ENCODE measurements at regions of chr4 and their contacts with region 1.

Region 1: DNA sequence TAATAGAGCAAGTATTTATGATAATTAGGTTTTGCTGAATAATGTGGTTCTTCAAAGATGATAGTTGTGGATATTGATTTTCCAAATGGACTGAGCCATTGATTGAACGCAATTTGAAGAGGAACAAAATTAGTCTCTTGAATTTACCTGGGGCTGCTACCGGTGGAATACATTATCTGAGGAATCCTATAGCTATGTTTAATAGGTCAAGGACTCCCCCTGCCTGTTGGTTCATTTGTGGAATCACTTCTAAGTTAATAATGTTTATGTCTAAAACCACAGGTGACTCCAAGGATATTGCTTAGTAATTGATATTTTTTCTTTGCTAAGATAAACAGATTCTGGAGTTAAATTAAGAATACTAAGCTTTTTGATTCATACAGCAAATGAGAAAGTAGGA is 576.0 kb upstream of the PABPC4L start:
- DNase-seq: peak; percentile 31
- H3K4me3 Mint-ChIP-seq: no peak overlapping the region
- H3K27ac Mint-ChIP-seq: no peak overlapping the region
- H3K4me1 Mint-ChIP-seq: no peaks in the 10 kb centered on the region
- H3K27me3 Mint-ChIP-seq: no peaks in the 10 kb centered on the region
- CTCF ChIP-seq: peak; percentile 26

Region 2: DNA sequence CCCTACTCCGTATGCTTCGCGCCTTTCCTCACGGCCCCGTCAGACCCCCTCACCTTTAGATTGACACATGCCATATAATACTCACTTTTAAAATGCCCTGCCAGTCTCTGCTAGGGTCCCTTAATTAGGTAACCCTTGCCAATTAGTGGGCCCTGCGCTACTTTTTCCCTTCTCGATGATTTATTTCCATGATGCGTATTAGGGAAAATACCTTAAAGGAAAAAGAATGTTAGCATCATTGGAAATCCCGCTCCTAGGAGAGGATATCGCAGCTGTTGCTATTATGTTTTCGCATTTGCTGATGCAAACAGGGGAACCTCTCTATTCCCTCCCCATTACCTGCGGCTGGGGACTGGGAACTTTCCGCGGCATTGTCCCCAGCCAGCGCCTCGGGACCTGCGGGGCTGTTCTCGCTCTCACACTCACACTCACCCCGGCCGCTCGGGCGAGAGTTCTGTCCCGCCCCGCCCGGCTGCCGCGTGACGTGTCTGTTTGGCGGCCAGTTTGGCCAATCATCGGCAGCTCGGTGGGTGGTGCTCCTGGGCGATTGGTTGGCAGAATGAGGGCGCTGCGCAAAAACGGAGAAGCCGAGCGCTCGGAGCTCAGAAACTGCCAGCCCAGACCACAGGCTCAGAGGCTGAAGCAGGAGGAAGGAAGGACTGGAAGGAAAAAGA is 1628.8 kb before region 1 on chr4 and contains the start of gene PCDH10:
- CTCF ChIA-PET with region 1: interaction called, 12 read pairs
- POLR2A ChIA-PET with region 1: interaction called, 3 read pairs
- intact Hi-C with region 1: loop called (anchors 5 kb)
- DNase-seq: no peak
- H3K4me3 Mint-ChIP-seq: no peak within 1 kb of the TSS
- H3K27ac Mint-ChIP-seq: no peak within 1 kb of the TSS
- H3K4me1 Mint-ChIP-seq: peaks cover 10% of the 10 kb centered on the region
- H3K27me3 Mint-ChIP-seq: peaks cover 45% of the 10 kb centered on the region
- CTCF ChIP-seq: no peak
- total RNA-seq, gene PCDH10: not detected in 2 replicates

Region 3: GRCh38 chr4:133154725-133155124 is 1622.9 kb before region 1 on chr4:
- CTCF ChIA-PET with region 1: interaction called, 12 read pairs
- POLR2A ChIA-PET with region 1: interaction called, 3 read pairs
- intact Hi-C with region 1: loop called (anchors 5 kb)
- DNase-seq: peak; percentile 31
- H3K4me3 Mint-ChIP-seq: no peak overlapping the region
- H3K27ac Mint-ChIP-seq: no peak overlapping the region
- H3K4me1 Mint-ChIP-seq: peaks cover 5% of the 10 kb centered on the region
- H3K27me3 Mint-ChIP-seq: peaks cover 23% of the 10 kb centered on the region
- CTCF ChIP-seq: peak; percentile 51

Region 4: GRCh38 chr4:133320576-133321170 is 1456.9 kb before region 1 on chr4:
- CTCF ChIA-PET with region 1: interaction called, 3 read pairs
- POLR2A ChIA-PET with region 1: no interaction called
- intact Hi-C with region 1: loop called (anchors 5 kb)
- DNase-seq: peak; percentile 51
- H3K4me3 Mint-ChIP-seq: no peak overlapping the region
- H3K27ac Mint-ChIP-seq: no peak overlapping the region
- H3K4me1 Mint-ChIP-seq: peaks cover 5% of the 10 kb centered on the region
- H3K27me3 Mint-ChIP-seq: peaks cover 38% of the 10 kb centered on the region
- CTCF ChIP-seq: peak; percentile 47

Region 5: GRCh38 chr4:134024251-134024650 is 753.4 kb before region 1 on chr4:
- CTCF ChIA-PET with region 1: interaction called, 11 read pairs
- POLR2A ChIA-PET with region 1: no interaction called
- intact Hi-C with region 1: loop called (anchors 2 kb)
- DNase-seq: peak; percentile 38
- H3K4me3 Mint-ChIP-seq: no peak overlapping the region
- H3K27ac Mint-ChIP-seq: no peak overlapping the region
- H3K4me1 Mint-ChIP-seq: peaks cover 12% of the 10 kb centered on the region
- H3K27me3 Mint-ChIP-seq: no peaks in the 10 kb centered on the region
- CTCF ChIP-seq: no peak

Region 6: GRCh38 chr4:134388351-134388750 is 389.3 kb before region 1 on chr4:
- CTCF ChIA-PET with region 1: no interaction called
- POLR2A ChIA-PET with region 1: no interaction called
- intact Hi-C with region 1: no loop called
- DNase-seq: no peak
- H3K4me3 Mint-ChIP-seq: no peak overlapping the region
- H3K27ac Mint-ChIP-seq: no peak overlapping the region
- H3K4me1 Mint-ChIP-seq: no peaks in the 10 kb centered on the region
- H3K27me3 Mint-ChIP-seq: no peaks in the 10 kb centered on the region
- CTCF ChIP-seq: no peak